IMR-90 (cell line): ENCODE measurements at regions of chrX and their contacts with region 1.

Region 1: DNA sequence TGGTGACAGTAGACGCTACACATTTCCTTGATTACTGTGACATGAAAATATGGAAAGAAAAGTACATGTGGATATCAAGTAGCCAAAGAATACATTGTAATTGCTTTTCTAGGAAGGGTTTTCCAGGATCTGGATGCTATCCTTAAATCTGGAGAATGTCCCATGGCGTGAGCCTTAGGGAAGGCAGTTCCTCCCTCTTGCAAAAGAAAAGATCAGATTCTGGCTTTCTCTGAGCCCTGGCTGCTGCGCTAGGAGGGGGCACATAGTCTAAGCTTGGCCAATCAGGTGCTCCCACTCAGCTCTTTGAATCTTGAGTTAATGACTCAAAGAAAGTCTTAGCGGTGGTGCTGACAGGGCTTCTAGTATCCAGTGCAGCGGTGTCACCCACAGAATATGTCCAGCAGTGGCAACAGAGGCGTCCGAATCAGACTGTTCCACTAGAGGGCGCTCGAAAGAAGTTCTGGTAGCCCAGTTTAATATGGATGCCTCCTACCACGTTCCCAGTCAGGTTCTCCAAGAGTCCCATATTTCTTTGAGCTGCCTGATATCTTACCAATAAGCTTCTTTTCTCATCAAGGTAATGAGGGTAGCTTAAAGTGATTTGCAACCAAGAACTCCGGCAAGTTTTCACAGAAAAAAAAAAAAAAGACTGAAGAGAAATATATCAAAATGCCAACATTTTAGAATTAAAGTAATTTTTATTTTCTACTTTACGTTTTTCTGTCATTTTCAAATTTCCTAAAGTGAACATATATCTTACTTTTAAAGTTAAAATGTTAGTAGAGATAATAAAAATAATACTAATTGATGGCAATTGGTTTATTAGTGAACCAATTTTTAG is 213.4 kb upstream of the S100G start:
- DNase-seq: peak; percentile 75
- ATAC-seq: peak; percentile 94
- H3K4me3 ChIP-seq: no peak overlapping the region
- H3K27ac ChIP-seq: no peak overlapping the region
- H3K4me1 ChIP-seq: no peaks in the 10 kb centered on the region
- H3K27me3 ChIP-seq: peaks cover 1% of the 10 kb centered on the region; the same call in 1 of the 2 replicates
- CTCF ChIP-seq: peak; percentile 70
- POLR2A ChIP-seq: no peak
- RAD21 ChIP-seq: peak; percentile 65

Region 2: DNA sequence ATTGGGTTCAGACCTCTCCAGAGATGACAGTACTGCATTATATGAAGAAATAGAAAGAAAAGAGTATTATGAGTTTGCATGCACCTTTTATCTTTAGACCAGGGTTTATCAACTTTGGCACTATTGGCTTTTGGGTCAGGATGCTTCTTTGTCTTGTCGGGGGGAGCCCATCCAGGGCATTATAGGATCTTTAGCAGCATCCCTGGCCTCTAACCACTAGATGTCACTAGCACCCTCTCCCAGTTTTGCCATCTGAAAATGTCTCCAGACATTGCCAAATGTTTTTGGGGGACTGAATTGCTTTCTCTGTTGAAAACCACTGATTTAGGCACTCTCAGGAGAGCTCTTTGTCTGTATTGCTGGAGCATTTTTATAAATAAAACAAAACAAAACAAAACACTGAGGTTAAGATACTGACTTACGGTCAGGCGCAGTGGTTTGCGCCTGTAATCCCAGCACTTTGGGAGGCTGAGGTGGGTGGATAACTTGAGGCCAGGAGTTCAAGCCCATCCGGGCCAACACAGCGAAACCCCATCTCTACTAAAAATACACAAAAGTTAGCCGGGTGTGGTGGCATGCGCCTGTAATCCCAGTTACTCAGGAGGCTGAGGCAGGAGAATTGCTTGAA is 674.9 kb before region 1 on chrX:
- CTCF ChIA-PET with region 1: no interaction called
- POLR2A ChIA-PET with region 1: no interaction called
- dilution Hi-C with region 1: no loop called
- in situ Hi-C with region 1: no loop called
- intact Hi-C with region 1: loop called (anchors 1 kb)
- DNase-seq: peak; percentile 41
- ATAC-seq: peak; percentile 86
- H3K4me3 ChIP-seq: no peak overlapping the region
- H3K27ac ChIP-seq: no peak overlapping the region
- H3K4me1 ChIP-seq: no peaks in the 10 kb centered on the region
- H3K27me3 ChIP-seq: no peaks in the 10 kb centered on the region
- CTCF ChIP-seq: peak; percentile 80
- POLR2A ChIP-seq: no peak
- RAD21 ChIP-seq: peak; percentile 76

Region 3: DNA sequence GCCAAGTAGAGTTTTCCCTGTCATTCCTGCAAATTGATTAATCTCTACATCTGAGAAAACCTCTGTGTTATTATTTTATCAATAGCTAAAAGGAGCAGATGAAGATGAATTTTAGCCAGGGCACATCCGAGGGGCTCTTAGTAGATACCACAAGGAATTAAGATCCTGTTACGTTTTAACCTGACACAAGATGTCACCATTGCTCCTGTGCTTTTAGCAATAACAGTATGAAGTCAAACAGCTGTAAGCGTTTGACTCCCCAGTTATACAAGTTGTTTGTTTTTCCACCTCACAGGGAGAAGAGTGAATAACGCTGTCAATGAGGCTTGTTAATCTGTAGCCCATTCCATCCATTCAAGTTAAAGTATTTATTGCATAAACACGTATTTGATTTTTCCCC is 506.0 kb before region 1 on chrX:
- CTCF ChIA-PET with region 1: no interaction called
- POLR2A ChIA-PET with region 1: no interaction called
- dilution Hi-C with region 1: no loop called
- in situ Hi-C with region 1: no loop called
- intact Hi-C with region 1: loop called (anchors 5 kb)
- DNase-seq: peak; percentile 66
- ATAC-seq: peak; percentile 60
- H3K4me3 ChIP-seq: no peak overlapping the region
- H3K27ac ChIP-seq: no peak overlapping the region
- H3K4me1 ChIP-seq: no peaks in the 10 kb centered on the region; the same call in 1 of the 2 replicates
- H3K27me3 ChIP-seq: peaks cover 4% of the 10 kb centered on the region; the same call in 1 of the 2 replicates
- CTCF ChIP-seq: peak; percentile 42
- POLR2A ChIP-seq: no peak
- RAD21 ChIP-seq: peak; percentile 61

Region 4: GRCh38 chrX:16664074-16664473 is 227.5 kb after region 1 on chrX:
- CTCF ChIA-PET with region 1: no interaction called
- POLR2A ChIA-PET with region 1: no interaction called
- dilution Hi-C with region 1: no loop called
- in situ Hi-C with region 1: loop called (anchors 10 kb)
- intact Hi-C with region 1: loop called (anchors 2 kb)
- DNase-seq: peak; percentile 67
- ATAC-seq: peak; percentile 56
- H3K4me3 ChIP-seq: no peak overlapping the region
- H3K27ac ChIP-seq: no peak overlapping the region
- H3K4me1 ChIP-seq: peaks cover 11% of the 10 kb centered on the region
- H3K27me3 ChIP-seq: no peaks in the 10 kb centered on the region; the same call in 1 of the 2 replicates
- CTCF ChIP-seq: peak; percentile 57
- POLR2A ChIP-seq: no peak
- RAD21 ChIP-seq: peak; percentile 61